Astrocyte of the cerebellum (primary cell): ENCODE measurements at regions of chr1 and their contacts with region 1.

Region 1: GRCh38 chr1:114040326-114041015 is 61.2 kb downstream of the OLFML3 start:
- DNase-seq: no peak
- H3K4me3 ChIP-seq: no peak overlapping the region
- CTCF ChIP-seq: no peak

Region 2: DNA sequence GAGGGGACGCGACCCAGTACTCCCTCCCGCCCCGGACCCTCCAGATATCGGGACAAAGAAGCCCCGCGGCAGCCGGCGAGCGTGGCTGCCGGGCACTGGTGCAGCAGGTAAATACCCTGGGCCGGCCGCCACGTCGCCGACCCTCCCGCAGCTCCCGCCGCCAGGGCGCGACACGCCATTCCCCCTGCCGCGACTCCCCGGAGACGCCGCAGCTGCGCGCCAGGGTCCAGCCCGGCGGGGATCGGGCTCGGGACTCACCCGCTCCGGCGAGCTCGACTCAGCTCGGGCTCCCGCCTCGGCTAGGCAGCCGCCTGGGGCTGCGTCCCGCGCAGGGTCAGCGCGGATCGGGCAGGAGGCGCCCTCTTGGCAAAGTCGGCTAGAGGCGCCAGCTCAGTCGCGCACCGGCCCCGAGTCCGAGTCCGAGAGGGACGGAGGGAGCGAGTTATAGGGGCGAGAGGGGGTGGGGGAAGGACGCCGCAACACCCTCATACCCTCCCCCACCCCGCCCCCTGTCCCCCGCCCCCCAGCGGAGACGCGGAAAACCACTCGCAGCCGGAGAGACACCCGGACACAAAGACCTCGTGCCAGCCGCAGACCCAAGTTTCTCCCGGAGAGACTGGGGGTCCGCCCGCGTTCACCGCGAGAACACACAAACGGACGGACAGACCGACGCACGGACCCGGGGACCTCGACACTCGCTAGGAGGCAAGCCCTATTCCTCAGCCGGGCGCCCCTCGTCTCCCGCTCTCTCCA is 112.2 kb after region 1 on chr1:
- in situ Hi-C with region 1: loop called (anchors 5 kb)
- DNase-seq: no peak
- H3K4me3 ChIP-seq: peak overlapping the region; percentile 34
- CTCF ChIP-seq: no peak

Region 3: DNA sequence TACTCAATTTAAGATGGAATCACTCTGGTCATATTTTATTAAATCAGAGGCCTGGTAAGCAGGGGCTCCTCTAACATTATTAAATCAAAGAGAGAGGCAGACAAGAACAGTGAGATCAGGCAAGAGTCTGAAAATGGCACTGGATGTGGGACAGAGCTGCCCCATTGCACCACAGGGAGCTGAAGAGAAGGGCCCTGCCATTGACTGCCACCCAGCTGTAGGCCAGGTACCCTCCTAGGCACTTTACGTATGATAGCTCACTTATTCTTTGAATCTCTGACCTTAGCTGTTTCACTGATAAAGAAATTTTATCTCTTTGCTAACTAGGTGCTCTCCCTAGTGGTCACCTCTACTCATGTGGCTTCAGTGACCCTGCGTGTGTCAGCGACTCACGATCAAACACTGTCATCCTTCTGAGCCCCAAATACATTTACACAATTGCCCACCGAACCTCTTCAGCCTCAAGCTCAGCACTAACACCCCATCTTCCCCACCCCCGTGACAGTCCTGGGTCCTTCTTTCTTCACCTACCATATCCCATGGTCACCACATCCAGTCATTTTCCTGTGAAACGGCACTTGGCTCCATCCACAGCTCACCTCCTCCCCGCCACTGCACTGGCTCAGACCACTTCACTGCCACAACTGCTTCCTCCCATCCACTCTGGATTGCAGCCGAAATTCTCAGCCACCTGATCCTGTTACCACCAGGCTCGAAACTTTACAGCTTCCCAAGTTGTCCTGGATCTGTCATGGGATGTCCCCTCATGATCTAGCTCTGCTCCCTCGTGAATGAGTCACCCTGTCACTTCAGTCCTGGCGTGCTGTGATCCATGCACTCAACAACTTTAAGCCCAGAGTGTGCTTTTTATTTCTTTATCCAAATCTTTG is 210.5 kb after region 1 on chr1:
- in situ Hi-C with region 1: no loop called
- DNase-seq: no peak
- H3K4me3 ChIP-seq: no peak overlapping the region
- CTCF ChIP-seq: no peak

Region 4: DNA sequence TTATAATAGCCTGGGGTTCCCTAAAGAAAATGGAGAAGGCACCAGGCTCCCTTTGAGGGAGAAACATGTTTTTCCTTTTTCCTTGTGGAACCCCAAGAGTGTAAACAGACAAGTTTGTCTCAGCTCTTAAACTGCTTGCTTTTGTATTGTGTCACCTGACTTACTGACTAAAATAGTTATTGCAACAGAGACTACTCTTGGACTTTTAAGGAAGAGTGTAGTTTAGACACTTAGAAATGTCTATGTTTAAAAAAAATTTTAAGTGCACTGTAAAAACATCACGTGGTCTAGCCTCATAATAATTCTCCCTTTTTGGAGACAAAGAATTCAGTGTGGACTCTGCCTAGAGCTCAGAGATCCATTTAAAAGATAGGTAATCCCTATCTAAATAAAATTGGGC is 329.5 kb after region 1 on chr1:
- in situ Hi-C with region 1: no loop called
- DNase-seq: no peak
- H3K4me3 ChIP-seq: no peak overlapping the region
- CTCF ChIP-seq: no peak